ENCODE measurements at regions of chr5 and their contacts with region 1.

Region 1: GRCh38 chr5:33588654-33589372 is 148.0 kb downstream of the TARS1 start:
- DNase-seq: peak; percentile 83
- ATAC-seq: peak; percentile 97
- H3K4me3 Mint-ChIP-seq: no peak overlapping the region
- H3K27ac Mint-ChIP-seq: no peak overlapping the region
- H3K4me1 Mint-ChIP-seq: peaks cover 6% of the 10 kb centered on the region
- H3K27me3 Mint-ChIP-seq: no peaks in the 10 kb centered on the region
- CTCF ChIP-seq: peak; percentile 78

Region 2: GRCh38 chr5:33235824-33236223 is 353.0 kb before region 1 on chr5:
- CTCF ChIA-PET with region 1: no interaction called
- POLR2A ChIA-PET with region 1: no interaction called
- DNase-seq: no peak
- ATAC-seq: no peak
- H3K4me3 Mint-ChIP-seq: no peak overlapping the region
- H3K27ac Mint-ChIP-seq: no peak overlapping the region
- H3K4me1 Mint-ChIP-seq: no peaks in the 10 kb centered on the region
- H3K27me3 Mint-ChIP-seq: no peaks in the 10 kb centered on the region
- CTCF ChIP-seq: no peak

Region 3: GRCh38 chr5:33409435-33410170 is 179.2 kb before region 1 on chr5:
- CTCF ChIA-PET with region 1: no interaction called
- POLR2A ChIA-PET with region 1: no interaction called
- DNase-seq: no peak
- ATAC-seq: no peak
- H3K4me3 Mint-ChIP-seq: no peak overlapping the region
- H3K27ac Mint-ChIP-seq: no peak overlapping the region
- H3K4me1 Mint-ChIP-seq: peaks cover 9% of the 10 kb centered on the region
- H3K27me3 Mint-ChIP-seq: no peaks in the 10 kb centered on the region
- CTCF ChIP-seq: no peak

Region 4: GRCh38 chr5:33440482-33441240 is 148.2 kb before region 1 on chr5 and contains the start of gene TARS1:
- CTCF ChIA-PET with region 1: interaction called, 11 read pairs
- POLR2A ChIA-PET with region 1: no interaction called
- DNase-seq: peak; percentile 98
- ATAC-seq: peak; percentile 97
- H3K4me3 Mint-ChIP-seq: no peak within 1 kb of the TSS
- H3K27ac Mint-ChIP-seq: no peak within 1 kb of the TSS
- H3K4me1 Mint-ChIP-seq: peaks cover 32% of the 10 kb centered on the region
- H3K27me3 Mint-ChIP-seq: no peaks in the 10 kb centered on the region
- CTCF ChIP-seq: no peak
- total RNA-seq, gene TARS1: 253 to 304 TPM (median 256 TPM) in 3 replicates

Region 5: DNA sequence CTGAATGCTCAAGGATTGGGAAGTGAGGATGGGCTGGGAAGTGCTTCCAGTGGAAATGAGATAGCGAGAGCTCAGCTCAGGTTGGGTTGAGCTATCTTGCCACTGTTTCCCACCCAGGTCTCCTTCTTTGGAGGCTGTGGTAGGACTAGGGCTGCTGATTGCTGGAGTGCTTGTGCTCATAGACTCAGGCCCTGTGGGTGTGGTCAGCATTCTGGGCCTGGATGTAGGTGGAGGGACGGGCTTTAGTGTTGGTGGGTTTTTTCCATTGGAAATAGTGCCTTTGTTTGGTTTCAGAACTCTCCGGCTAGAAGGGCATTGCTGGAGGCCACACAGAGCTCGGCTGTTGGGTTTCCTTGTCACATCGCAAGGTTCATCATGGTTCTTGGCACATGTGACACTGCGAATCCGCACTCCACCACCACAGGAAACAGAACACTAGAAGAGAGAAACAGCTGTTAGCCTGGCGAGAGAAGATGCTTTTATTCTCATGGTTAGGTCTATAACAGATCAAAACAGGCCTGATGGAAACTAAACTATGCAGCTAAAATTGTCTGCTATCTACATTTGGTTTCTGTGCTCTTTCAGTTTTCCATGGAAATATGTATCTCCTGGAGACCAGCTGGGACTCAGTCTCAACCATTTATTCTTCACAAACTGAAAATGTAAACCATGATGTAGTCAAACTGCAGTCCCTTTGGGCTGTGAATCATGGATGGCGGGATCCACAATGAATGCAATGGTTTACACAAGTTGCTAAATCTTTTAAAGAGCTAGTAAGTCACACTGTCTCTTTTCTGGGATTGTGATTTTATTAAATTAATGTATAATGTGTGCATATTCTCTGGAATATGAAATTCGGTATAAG is 11.9 kb before region 1 on chr5:
- CTCF ChIA-PET with region 1: interaction called, 45 read pairs
- POLR2A ChIA-PET with region 1: no interaction called
- DNase-seq: no peak
- ATAC-seq: no peak
- H3K4me3 Mint-ChIP-seq: no peak overlapping the region
- H3K27ac Mint-ChIP-seq: no peak overlapping the region
- H3K4me1 Mint-ChIP-seq: no peaks in the 10 kb centered on the region
- H3K27me3 Mint-ChIP-seq: no peaks in the 10 kb centered on the region
- CTCF ChIP-seq: no peak

Region 6: GRCh38 chr5:33601881-33602280 is 13.1 kb after region 1 on chr5:
- CTCF ChIA-PET with region 1: interaction called, 26 read pairs
- POLR2A ChIA-PET with region 1: no interaction called
- DNase-seq: no peak
- ATAC-seq: peak; percentile 51; the same call in 1 of the 2 replicates
- H3K4me3 Mint-ChIP-seq: no peak overlapping the region
- H3K27ac Mint-ChIP-seq: no peak overlapping the region
- H3K4me1 Mint-ChIP-seq: peaks cover 4% of the 10 kb centered on the region
- H3K27me3 Mint-ChIP-seq: no peaks in the 10 kb centered on the region
- CTCF ChIP-seq: no peak

Region 7: GRCh38 chr5:33608476-33609041 is 19.7 kb after region 1 on chr5:
- CTCF ChIA-PET with region 1: interaction called, 20 read pairs
- POLR2A ChIA-PET with region 1: no interaction called
- DNase-seq: no peak
- ATAC-seq: peak; percentile 71
- H3K4me3 Mint-ChIP-seq: no peak overlapping the region
- H3K27ac Mint-ChIP-seq: no peak overlapping the region
- H3K4me1 Mint-ChIP-seq: no peaks in the 10 kb centered on the region
- H3K27me3 Mint-ChIP-seq: no peaks in the 10 kb centered on the region
- CTCF ChIP-seq: no peak

Region 8: DNA sequence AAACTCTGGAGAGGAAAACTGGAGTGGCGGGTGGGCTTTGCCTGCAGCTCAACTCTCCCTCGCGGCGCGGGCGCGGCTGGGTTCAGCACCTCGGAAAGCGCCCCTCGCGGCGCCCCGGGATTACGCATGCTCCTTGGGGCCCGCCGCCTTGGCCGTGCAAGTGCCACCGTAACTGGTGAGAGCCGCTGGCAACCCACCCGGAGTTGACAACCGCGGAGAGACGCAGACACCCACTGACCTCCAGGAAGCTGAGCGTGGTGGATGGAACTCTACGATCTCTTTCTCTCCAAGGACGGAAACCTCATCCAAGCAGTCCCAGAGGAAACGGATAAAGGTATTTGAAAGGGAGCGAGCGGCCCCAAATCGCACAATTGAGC is 347.2 kb after region 1 on chr5:
- CTCF ChIA-PET with region 1: interaction called, 57 read pairs
- POLR2A ChIA-PET with region 1: no interaction called
- DNase-seq: peak; percentile 87
- ATAC-seq: peak; percentile 71
- H3K4me3 Mint-ChIP-seq: peak overlapping the region; percentile 82
- H3K27ac Mint-ChIP-seq: no peak overlapping the region
- H3K4me1 Mint-ChIP-seq: peaks cover 25% of the 10 kb centered on the region
- H3K27me3 Mint-ChIP-seq: peaks cover 29% of the 10 kb centered on the region
- CTCF ChIP-seq: no peak

Region 9: GRCh38 chr5:33969572-33970452 is 381.0 kb after region 1 on chr5:
- CTCF ChIA-PET with region 1: interaction called, 29 read pairs
- POLR2A ChIA-PET with region 1: no interaction called
- DNase-seq: peak; percentile 16
- ATAC-seq: peak; percentile 92
- H3K4me3 Mint-ChIP-seq: no peak overlapping the region
- H3K27ac Mint-ChIP-seq: no peak overlapping the region
- H3K4me1 Mint-ChIP-seq: peaks cover 17% of the 10 kb centered on the region
- H3K27me3 Mint-ChIP-seq: no peaks in the 10 kb centered on the region
- CTCF ChIP-seq: no peak; the same call in 1 of the 2 replicates

Measured in WTC11 (cell line).